Naive thymus-derived CD4-positive, alpha-beta T cell (primary cell): ENCODE measurements at regions of chr9 and their contacts with region 1.

Region 1: DNA sequence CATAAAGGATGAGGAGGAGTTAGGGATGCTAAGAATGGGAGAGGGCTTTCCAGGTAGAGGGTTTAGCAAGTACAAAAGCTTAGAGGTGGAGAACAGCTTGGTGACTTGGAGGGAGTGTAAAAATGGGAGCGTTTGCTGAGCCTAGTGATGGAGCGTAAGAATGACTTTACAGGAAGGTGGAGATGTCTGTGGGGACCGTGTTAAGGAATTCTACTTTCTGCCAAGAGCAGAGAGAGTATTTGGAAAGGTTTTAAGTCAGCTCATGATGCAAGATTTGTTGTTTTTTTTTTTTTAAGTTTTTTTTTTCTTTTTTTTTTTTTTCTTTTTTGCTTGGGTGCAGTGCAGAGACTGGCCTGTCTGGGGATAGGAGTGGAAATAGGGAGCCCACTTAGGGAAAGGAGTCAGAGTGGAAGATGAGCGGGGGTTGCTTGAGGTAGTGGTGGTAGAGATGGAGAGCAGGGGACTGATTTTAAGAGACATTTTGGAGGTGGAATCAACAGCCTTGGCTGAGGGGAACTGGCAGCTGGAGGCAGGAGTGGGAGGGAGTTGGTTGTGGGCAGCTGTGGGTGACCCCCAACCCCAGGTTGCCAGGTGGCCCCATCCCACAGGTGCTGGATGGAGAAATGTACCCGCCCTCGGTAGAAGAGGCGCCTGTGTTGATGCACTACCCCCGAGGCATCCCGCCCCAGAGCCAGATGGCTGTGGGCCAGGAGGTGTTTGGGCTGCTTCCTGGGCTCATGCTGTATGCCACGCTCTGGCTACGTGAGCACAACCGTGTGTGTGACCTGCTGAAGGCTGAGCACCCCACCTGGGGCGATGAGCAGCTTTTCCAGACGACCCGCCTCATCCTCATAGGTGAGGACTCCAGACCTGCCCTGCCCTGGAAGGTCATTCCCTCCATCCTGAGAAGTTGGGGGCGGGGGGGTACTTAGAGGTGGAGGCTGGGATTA is 12.4 kb downstream of the PTGS1 start:
- DNase-seq: no peak
- ATAC-seq: no peak
- H3K4me3 ChIP-seq: no peak overlapping the region
- H3K4me3 Mint-ChIP-seq: no peak overlapping the region
- H3K27ac ChIP-seq: no peak overlapping the region
- H3K27ac Mint-ChIP-seq: no peak overlapping the region
- H3K4me1 ChIP-seq: no peaks in the 10 kb centered on the region
- H3K4me1 Mint-ChIP-seq: peaks cover 0 to under 1% (median 0%) of the 10 kb centered on the region in 7 donors
- H3K27me3 ChIP-seq: no peaks in the 10 kb centered on the region
- H3K27me3 Mint-ChIP-seq: peaks cover 0 to 9% (median 6%) of the 10 kb centered on the region in 5 donors

Region 2: GRCh38 chr9:122406070-122406890 is 23.1 kb after region 1 on chr9:
- CTCF ChIA-PET with region 1: no interaction called
- POLR2A ChIA-PET with region 1: no interaction called
- intact Hi-C with region 1: loop called in 1 of 2 experiments (anchors 1 kb)
- DNase-seq: peak in 2 of 9 donors; percentile 4 to 43
- ATAC-seq: peak; percentile 70
- H3K4me3 ChIP-seq: no peak overlapping the region
- H3K4me3 Mint-ChIP-seq: peak overlapping the region in 8 of 10 donors; percentile 25 to 90 (median 70)
- H3K27ac ChIP-seq: no peak overlapping the region
- H3K27ac Mint-ChIP-seq: peak overlapping the region in 3 of 9 donors; percentile 49 to 83 (median 68)
- H3K4me1 ChIP-seq: no peaks in the 10 kb centered on the region
- H3K4me1 Mint-ChIP-seq: peaks cover 0 to 11% (median 0%) of the 10 kb centered on the region in 7 donors
- H3K27me3 ChIP-seq: no peaks in the 10 kb centered on the region
- H3K27me3 Mint-ChIP-seq: peaks cover 0 to 19% (median 4%) of the 10 kb centered on the region in 5 donors